ENCODE measurements at regions of chr1 and their contacts with region 1.

Region 1: DNA sequence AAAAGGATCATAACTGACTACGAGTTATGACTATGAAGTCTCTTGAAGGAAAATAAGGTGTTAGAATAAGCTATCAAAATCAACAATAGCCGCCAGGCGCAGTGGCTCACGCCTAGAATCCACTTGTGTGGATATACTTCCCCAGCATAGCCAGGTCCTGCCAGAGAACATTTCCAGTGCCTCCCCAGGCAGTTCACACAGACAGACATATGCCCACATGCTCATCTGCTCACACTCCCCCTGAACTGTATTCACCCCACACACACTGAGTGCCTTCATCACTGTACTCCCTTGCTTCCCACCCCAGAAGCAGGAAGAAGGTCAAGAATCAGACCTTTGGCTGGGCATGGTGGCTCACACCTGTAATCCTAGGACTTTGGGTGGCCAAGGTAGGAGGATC is 6.5 kb downstream of the RERE start:
- DNase-seq: no peak
- H3K4me3 ChIP-seq: no peak overlapping the region
- H3K4me3 Mint-ChIP-seq: no peak overlapping the region
- H3K27ac Mint-ChIP-seq: no peak overlapping the region
- H3K4me1 ChIP-seq: peaks cover 9% of the 10 kb centered on the region; the same call in 1 of the 2 replicates
- H3K4me1 Mint-ChIP-seq: peaks cover 26% of the 10 kb centered on the region
- H3K27me3 ChIP-seq: no peaks in the 10 kb centered on the region
- H3K27me3 Mint-ChIP-seq: no peaks in the 10 kb centered on the region
- CTCF ChIP-seq: no peak

Region 2: DNA sequence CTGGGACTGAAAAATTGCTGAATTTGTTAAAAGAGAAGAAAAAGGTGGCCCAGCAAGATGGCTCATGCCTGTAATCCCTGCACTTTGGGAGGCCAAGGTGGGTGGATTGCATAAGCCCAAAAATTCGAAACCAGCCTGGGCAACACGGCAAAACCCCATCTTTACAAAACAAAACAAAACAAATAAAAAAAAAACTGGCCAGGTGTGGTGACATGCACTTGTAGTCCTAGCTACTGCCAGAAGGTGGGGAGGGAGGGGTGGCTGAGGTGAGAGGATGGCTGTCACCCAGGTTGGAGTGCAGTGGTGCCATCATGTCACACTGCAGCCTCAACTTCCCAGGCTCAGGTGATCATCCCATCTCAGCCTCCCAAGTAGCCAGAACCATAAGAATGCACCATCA is 16.4 kb before region 1 on chr1:
- CTCF ChIA-PET with region 1: interaction called, 3 read pairs
- POLR2A ChIA-PET with region 1: interaction called, 11 read pairs
- intact Hi-C with region 1: no loop called
- DNase-seq: peak; percentile 41 to 59
- H3K4me3 ChIP-seq: no peak overlapping the region
- H3K4me3 Mint-ChIP-seq: no peak overlapping the region
- H3K27ac Mint-ChIP-seq: no peak overlapping the region
- H3K4me1 ChIP-seq: peaks cover 17% of the 10 kb centered on the region
- H3K4me1 Mint-ChIP-seq: peaks cover 19% of the 10 kb centered on the region
- H3K27me3 ChIP-seq: no peaks in the 10 kb centered on the region
- H3K27me3 Mint-ChIP-seq: no peaks in the 10 kb centered on the region
- CTCF ChIP-seq: peak; percentile 22 to 38